ENCODE measurements at regions of chr9 and their contacts with region 1.

Region 1: GRCh38 chr9:69027355-69028096 is 8.0 kb upstream of the FXN start:
- DNase-seq: peak; percentile 32
- H3K4me3 Mint-ChIP-seq: no peak overlapping the region
- H3K27ac Mint-ChIP-seq: peak overlapping the region; percentile 18
- H3K4me1 Mint-ChIP-seq: peaks cover 51% of the 10 kb centered on the region
- H3K27me3 Mint-ChIP-seq: peaks cover 1% of the 10 kb centered on the region

Region 2: DNA sequence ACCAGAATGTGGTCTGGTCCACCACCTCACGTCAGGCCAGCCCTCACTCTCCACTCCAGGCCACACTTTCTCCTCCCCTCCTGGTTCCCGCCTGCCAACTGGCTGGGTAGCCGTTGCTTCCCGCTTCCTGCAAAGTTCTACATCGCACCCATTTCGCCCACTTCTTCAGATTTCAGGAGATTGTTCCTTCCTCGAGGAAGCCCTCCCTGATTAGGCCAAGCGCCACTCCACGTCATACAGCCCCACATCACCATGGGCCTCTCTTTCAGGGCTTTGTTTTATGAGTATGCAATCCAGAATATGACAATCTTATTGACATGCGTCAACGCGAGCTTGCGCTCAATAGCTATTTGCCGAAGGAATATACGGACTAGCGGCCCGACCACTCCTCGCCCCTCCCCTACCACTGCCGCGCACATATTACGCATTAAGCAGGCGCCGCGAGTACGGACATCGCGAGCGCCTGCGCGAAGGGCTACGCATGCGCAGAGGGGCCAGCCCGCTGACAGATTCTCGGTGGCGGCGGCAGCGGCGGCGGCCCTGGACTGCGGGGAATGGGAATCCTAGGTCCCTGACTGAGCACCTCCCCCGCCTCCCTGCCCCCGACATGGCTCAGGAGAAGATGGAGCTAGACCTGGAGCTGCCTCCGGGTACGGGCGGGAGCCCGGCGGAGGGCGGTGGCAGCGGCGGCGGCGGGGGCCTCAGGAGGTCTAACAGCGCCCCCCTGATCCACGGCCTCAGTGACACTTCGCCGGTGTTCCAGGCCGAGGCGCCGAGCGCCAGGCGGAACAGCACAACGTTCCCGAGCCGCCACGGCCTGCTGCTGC is 247.8 kb before region 1 on chr9:
- intact Hi-C with region 1: loop called (anchors 1 kb)
- DNase-seq: peak; percentile 89
- H3K4me3 Mint-ChIP-seq: no peak overlapping the region
- H3K27ac Mint-ChIP-seq: no peak overlapping the region
- H3K4me1 Mint-ChIP-seq: peaks cover 4% of the 10 kb centered on the region
- H3K27me3 Mint-ChIP-seq: no peaks in the 10 kb centered on the region

Region 3: GRCh38 chr9:68979538-68980314 is 47.8 kb before region 1 on chr9:
- intact Hi-C with region 1: loop called (anchors 1 kb)
- DNase-seq: peak; percentile 38
- H3K4me3 Mint-ChIP-seq: peak overlapping the region; percentile 69
- H3K27ac Mint-ChIP-seq: peak overlapping the region; percentile 97
- H3K4me1 Mint-ChIP-seq: peaks cover 85% of the 10 kb centered on the region
- H3K27me3 Mint-ChIP-seq: peaks cover 2% of the 10 kb centered on the region

Region 4: DNA sequence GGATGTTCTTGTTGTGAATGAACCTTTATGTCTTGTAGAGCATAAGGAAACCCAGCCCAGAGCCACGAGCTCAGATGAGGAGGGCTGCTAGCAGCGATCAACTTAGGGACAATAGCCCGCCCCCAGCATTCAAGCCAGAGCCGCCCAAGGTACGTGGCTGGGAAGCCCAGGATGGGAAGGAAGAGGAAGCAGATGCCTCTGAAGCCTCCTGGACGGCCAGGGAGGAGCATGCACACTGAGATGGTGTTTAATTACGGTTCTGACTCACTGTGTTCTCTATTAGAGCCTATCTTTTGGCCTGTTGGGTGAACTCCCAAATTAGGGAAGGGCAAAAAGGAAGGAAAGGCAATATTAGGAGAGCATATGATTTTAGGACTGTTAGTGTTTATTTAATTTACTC is 221.8 kb after region 1 on chr9:
- intact Hi-C with region 1: no loop called
- DNase-seq: no peak
- H3K4me3 Mint-ChIP-seq: no peak overlapping the region
- H3K27ac Mint-ChIP-seq: no peak overlapping the region
- H3K4me1 Mint-ChIP-seq: no peaks in the 10 kb centered on the region
- H3K27me3 Mint-ChIP-seq: no peaks in the 10 kb centered on the region

Measured in activated T-helper 1 cell treated with anti-CD3 and anti-CD28 coated beads, Interleukin-12 subunit alpha, Interleukin-12 subunit beta, Interleukin-2, Interleukin-4 antibody, amounts not matched to agents 30 ng/mL and 10 ng/mL and 1 ng/mL, durations not matched to agents 14 hours and 24 hours and 36 hours (primary cell).